Dendritic cell treated with granulocyte-macrophage colony-stimulating factor and Interleukin-4, amounts not matched to agents 40 ng/mL and 50 ng/mL, for 4 days (primary cell): ENCODE measurements at regions of chr3 and their contacts with region 1.

Region 1: DNA sequence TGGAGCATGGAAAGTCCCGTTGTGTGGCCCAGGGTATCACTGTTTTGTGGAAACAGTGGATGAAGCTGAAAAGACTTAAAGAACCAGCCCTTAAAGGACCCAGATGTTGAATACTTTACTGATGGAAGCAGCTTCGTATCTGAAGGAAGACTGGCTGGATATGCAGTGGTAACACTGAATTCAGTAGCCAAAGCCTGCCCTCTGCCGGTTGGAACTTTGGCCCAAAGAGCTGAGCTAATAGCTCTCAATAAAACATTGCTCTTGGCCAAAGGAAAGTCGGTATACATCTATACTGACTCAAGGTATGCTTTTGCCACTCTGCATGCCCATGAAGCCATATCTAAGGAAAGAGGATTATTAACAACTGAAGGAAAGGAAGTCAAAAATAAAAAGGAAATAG is 885.4 kb downstream of the PDCD6IP start:
- H3K4me3 Mint-ChIP-seq: no peak overlapping the region
- H3K27ac Mint-ChIP-seq: no peak overlapping the region
- H3K4me1 Mint-ChIP-seq: peaks cover 7% of the 10 kb centered on the region
- H3K27me3 Mint-ChIP-seq: no peaks in the 10 kb centered on the region

Region 2: DNA sequence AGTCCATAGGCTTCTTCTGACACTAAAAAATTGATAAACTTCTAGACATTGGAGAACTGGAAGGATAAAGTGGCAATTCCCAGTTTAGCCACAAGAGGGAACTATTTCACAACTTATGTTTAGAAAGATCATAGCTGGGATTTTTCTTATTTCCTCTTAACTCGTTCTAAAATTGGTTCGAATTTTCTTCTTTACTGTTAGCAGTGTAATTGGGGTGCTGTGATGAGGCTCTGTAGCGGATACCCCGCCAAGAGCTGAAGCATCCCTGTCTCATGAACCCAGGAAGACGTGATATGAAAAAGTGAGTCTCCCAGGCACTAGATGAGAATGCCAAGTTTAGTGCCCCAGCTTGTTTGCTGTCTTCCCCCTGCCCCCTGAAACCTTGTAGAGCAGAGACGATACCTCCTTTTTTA is 800.3 kb before region 1 on chr3:
- intact Hi-C with region 1: loop called (anchors 1 kb)
- H3K4me3 Mint-ChIP-seq: no peak overlapping the region
- H3K27ac Mint-ChIP-seq: no peak overlapping the region
- H3K4me1 Mint-ChIP-seq: no peaks in the 10 kb centered on the region
- H3K27me3 Mint-ChIP-seq: no peaks in the 10 kb centered on the region

Region 3: GRCh38 chr3:34107669-34108068 is 576.2 kb before region 1 on chr3:
- intact Hi-C with region 1: loop called (anchors 2 kb)
- H3K4me3 Mint-ChIP-seq: no peak overlapping the region
- H3K27ac Mint-ChIP-seq: no peak overlapping the region
- H3K4me1 Mint-ChIP-seq: peaks cover 9% of the 10 kb centered on the region
- H3K27me3 Mint-ChIP-seq: no peaks in the 10 kb centered on the region

Region 4: GRCh38 chr3:34260271-34261006 is 423.4 kb before region 1 on chr3:
- intact Hi-C with region 1: loop called (anchors 2 kb)
- H3K4me3 Mint-ChIP-seq: no peak overlapping the region
- H3K27ac Mint-ChIP-seq: no peak overlapping the region
- H3K4me1 Mint-ChIP-seq: peaks cover 46% of the 10 kb centered on the region
- H3K27me3 Mint-ChIP-seq: no peaks in the 10 kb centered on the region

Region 5: DNA sequence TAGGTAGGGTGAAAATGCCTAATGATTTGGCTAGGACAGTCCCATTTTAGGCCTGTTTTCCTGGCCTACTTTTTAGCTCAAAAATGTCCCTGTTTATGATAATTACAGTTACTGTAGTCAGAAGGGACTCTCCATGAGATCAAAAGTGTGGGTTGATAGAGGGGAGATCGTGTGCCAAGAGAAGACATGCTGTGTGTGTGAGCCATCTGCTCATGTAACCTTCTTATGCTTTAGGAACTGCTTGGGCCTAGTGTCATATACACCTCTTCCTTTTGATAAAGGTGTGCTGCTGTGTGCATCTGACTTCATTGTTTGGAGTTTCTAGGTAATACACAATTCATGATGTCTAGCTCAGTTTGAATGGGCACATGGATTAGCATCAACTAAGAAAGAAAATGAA is 98.9 kb before region 1 on chr3:
- intact Hi-C with region 1: no loop called
- H3K4me3 Mint-ChIP-seq: no peak overlapping the region
- H3K27ac Mint-ChIP-seq: no peak overlapping the region
- H3K4me1 Mint-ChIP-seq: no peaks in the 10 kb centered on the region
- H3K27me3 Mint-ChIP-seq: no peaks in the 10 kb centered on the region